ENCODE measurements at regions of chr16 and their contacts with region 1.

Region 1: DNA sequence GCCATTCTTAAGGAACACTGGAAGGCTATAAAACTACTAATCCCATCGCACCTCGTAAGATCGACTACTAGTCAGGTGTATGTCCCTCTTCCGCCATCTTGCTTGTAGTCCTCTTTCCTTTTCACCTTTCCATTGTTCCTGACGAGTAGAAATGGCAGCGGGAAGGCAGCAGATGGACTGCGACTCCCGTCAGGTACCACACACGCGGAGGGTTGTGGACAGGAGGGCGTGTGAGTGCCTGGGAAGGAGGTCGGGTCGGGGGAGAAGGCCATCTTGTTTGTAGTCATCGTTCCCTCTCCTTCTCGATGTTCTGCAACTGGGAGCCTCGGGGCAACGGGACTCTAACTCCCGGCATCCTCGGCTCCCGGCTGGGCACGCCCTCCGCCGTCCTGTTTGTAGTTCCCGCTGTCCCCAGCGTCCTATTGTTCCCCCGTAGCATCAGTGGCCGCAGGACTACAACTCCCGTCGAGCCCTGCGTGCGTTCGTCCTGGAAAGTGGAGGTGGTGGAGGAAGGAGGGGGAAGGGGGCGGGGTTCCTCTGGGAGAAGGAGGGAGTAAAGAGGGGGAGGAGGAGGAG is 324 bp upstream of the FBXL19 start:
- DNase-seq: peak; percentile 90 to 99 (median 94)
- ATAC-seq: peak; percentile 66
- H3K4me3 ChIP-seq: peak overlapping the region; percentile 75 to 96
- H3K4me3 Mint-ChIP-seq: peak overlapping the region; percentile 99
- H3K27ac ChIP-seq: peak overlapping the region; percentile 73 to 92
- H3K27ac Mint-ChIP-seq: peak overlapping the region; percentile 99
- H3K4me1 ChIP-seq: peaks cover 14% of the 10 kb centered on the region
- H3K4me1 Mint-ChIP-seq: peaks cover 22% of the 10 kb centered on the region
- H3K27me3 ChIP-seq: no peaks in the 10 kb centered on the region
- H3K27me3 Mint-ChIP-seq: no peaks in the 10 kb centered on the region
- CTCF ChIP-seq: no peak

Region 2: DNA sequence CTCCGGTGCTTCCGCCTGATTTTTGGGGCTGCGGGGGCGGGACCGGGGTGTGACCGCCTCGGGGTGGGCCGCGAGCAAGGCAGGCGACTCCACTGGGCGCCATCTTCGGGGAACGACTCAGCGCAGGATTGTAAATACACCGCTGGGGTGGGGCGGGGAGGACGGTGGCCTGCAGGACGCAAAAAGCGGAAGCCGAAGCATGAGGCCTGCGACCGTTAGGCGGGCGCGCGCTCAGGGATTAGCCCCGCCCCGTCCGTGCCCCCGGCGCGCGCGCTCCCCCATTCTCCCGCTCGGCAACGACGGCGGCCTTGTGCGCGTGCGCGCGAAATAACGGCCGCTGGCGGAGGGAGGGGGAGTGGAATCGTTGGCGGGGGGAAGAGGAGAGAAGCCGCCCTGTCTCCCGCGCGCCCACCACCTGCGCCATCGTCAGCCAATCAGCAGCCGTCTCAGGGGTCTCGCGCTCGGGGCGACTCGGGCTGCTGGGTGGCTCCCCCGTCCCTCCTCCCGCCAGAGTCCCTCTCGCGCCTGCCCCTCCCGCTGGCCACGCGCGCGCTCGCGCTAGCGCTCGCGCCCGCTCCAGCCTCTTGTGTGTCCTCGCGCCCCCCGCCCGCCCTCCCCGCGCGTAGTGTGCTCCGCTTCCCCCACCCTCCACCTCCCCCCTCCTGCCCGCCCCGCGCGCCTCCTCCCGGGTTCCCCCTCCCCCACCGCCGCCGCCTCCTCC is 1117.5 kb before region 1 on chr16:
- CTCF ChIA-PET with region 1: no interaction called
- POLR2A ChIA-PET with region 1: no interaction called
- intact Hi-C with region 1: loop called in 1 of 2 experiments (anchors 5 kb)
- DNase-seq: peak; percentile 95 to 99 (median 98)
- ATAC-seq: peak; percentile 60
- H3K4me3 ChIP-seq: peak overlapping the region; percentile 70 to 82
- H3K4me3 Mint-ChIP-seq: peak overlapping the region; percentile 99
- H3K27ac ChIP-seq: peak overlapping the region; percentile 86 to 87
- H3K27ac Mint-ChIP-seq: peak overlapping the region; percentile 100
- H3K4me1 ChIP-seq: peaks cover 42% of the 10 kb centered on the region
- H3K4me1 Mint-ChIP-seq: peaks cover 39% of the 10 kb centered on the region
- H3K27me3 ChIP-seq: no peaks in the 10 kb centered on the region
- H3K27me3 Mint-ChIP-seq: no peaks in the 10 kb centered on the region
- CTCF ChIP-seq: no peak

Region 3: DNA sequence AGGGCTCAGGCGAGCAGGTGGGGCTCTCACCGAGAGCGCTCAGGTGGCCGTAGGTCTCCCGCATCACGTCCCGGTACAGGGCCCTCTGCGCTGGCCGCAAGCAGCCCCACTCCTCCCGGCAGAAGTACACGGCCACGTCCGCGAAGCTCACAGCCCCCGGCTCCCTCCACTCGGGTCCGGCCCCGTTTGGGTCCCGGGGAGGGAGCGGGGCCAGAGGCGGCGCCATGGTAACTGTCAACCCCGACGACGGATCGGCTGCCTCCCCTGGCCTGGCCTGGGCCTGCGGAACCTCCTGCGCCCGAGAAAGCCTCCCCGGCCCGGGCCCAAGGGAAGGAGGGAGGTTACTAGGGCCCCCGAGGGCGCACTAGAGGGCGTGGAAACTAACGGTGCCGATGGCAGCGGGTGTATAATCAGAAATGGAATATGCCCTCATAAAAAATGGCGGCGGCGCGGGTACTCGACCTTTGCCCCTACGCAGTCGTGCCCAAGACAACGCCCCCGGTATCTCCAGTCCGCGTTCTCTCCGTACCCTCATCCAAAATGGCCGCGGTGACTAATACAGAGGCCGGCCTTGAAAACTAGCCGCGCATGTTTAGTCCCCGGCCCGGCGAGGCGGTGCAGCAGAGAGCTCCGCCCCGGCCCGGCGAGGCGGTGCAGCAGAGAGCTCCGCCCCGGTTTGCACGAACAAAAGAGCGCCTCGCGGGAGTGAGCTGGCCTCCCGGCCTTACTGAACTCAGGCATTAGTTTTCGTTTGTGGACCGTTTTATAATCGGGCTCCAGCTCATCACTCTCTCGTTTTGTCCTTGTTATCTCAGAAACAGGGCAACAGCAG is 364.9 kb before region 1 on chr16 and contains the start of gene ZNF764:
- CTCF ChIA-PET with region 1: no interaction called
- POLR2A ChIA-PET with region 1: no interaction called
- intact Hi-C with region 1: loop called in 1 of 2 experiments (anchors 2 kb)
- DNase-seq: peak; percentile 88 to 98 (median 96)
- ATAC-seq: peak; percentile 90
- H3K4me3 ChIP-seq: peak within 1 kb of the TSS; percentile 68 to 84
- H3K4me3 Mint-ChIP-seq: peak within 1 kb of the TSS; percentile 84
- H3K27ac ChIP-seq: peak within 1 kb of the TSS; percentile 80 to 88
- H3K27ac Mint-ChIP-seq: peak within 1 kb of the TSS; percentile 93
- H3K4me1 ChIP-seq: peaks cover 28% of the 10 kb centered on the region
- H3K4me1 Mint-ChIP-seq: peaks cover 35% of the 10 kb centered on the region
- H3K27me3 ChIP-seq: no peaks in the 10 kb centered on the region
- H3K27me3 Mint-ChIP-seq: no peaks in the 10 kb centered on the region
- CTCF ChIP-seq: no peak
- total RNA-seq, gene ZNF764: 15.0 to 15.6 TPM

Region 4: GRCh38 chr16:30698139-30698815 is 224.8 kb before region 1 on chr16:
- CTCF ChIA-PET with region 1: no interaction called
- POLR2A ChIA-PET with region 1: no interaction called
- intact Hi-C with region 1: loop called in 1 of 2 experiments (anchors 1 kb)
- DNase-seq: peak; percentile 96 to 99 (median 99)
- ATAC-seq: peak; percentile 74
- H3K4me3 ChIP-seq: peak overlapping the region; percentile 84 to 99
- H3K4me3 Mint-ChIP-seq: peak overlapping the region; percentile 97
- H3K27ac ChIP-seq: peak overlapping the region; percentile 98 to 100
- H3K27ac Mint-ChIP-seq: peak overlapping the region; percentile 100
- H3K4me1 ChIP-seq: peaks cover 24% of the 10 kb centered on the region
- H3K4me1 Mint-ChIP-seq: peaks cover 35% of the 10 kb centered on the region
- H3K27me3 ChIP-seq: no peaks in the 10 kb centered on the region
- H3K27me3 Mint-ChIP-seq: no peaks in the 10 kb centered on the region
- CTCF ChIP-seq: no peak

Region 5: DNA sequence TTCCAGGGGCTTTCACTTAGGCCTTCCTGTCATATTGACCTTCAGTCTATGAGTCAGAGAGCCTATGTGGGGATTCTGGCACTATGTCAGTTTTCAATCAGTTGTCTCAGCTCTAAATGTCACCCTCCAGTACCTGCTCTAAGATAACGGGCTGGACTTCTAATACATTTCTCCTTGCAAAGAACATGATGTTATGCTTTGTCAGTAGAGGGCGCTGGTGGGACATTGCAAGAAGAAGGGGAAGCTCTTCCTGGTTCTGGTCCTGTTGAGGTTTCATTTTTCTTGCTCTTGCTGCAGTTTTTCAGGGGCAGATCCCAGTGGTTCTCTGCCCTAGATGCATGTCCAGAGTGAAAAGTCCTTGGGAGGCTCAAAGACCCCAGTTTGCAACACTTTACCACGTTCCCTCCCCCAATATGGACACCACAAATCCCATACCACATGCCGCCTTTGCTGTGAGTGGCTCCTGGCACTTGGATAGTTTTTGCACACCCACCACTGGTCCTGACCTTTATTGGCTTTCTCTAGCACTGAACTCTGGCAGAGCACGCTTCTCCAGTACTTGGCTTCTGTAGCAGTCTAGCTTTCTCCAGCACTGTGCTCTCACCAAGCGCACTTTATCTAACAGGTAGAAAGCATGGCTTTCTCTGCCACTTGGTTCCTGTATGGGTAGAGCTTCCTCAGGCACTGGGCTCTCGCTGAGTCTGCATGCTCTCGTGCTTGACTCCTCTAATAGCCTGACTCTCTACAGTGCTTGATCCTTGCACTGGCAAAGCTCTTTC is 78.2 kb before region 1 on chr16:
- CTCF ChIA-PET with region 1: interaction called, 67 read pairs
- POLR2A ChIA-PET with region 1: interaction called, 5 read pairs
- intact Hi-C with region 1: loop called in 1 of 2 experiments (anchors 1 kb)
- DNase-seq: peak; percentile 49 to 92 (median 82)
- ATAC-seq: peak; percentile 93
- H3K4me3 ChIP-seq: no peak overlapping the region
- H3K4me3 Mint-ChIP-seq: peak overlapping the region; percentile 57
- H3K27ac ChIP-seq: no peak overlapping the region
- H3K27ac Mint-ChIP-seq: peak overlapping the region; percentile 84
- H3K4me1 ChIP-seq: peaks cover 6% of the 10 kb centered on the region
- H3K4me1 Mint-ChIP-seq: peaks cover 8% of the 10 kb centered on the region
- H3K27me3 ChIP-seq: no peaks in the 10 kb centered on the region
- H3K27me3 Mint-ChIP-seq: no peaks in the 10 kb centered on the region
- CTCF ChIP-seq: peak; percentile 80

Region 6: DNA sequence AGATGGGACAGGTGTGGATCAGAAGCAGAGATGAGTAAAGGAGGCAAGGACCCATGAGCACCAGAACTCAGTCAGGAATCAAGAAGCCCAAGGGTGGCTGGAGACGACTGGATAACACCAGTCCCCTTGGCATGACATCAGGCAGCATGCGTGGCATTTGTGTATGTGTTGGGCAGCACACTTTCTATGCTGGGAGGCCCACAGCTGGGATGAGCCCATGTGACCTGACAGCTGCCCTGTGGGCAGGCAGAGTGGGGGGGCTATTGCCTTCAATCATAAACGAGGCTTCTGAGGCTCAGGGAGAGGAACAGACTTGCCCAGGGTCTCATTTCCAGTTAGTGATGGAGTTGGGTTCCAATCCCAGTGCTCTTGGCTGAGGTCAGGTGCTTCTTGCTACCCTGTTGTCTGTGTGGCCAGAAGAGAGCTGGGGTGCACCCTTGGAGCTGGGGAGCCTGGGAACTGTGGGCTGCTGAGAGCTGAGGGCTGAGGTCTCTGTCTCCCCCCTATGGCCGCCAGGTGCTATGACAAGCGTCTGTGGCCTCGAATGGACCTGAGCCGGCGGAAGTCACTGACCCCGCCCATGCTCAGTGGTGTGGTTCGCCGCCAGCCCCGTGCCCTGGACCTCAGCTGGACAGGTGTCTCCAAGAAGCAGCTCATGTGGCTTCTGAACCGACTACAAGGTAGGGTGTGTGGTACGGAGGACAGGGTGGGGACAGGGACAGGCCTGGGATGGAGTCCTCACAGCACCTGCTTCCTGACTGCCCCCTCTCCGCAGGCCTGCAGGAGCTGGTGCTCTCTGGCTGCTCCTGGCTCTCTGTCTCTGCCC is 18.8 kb after region 1 on chr16:
- CTCF ChIA-PET with region 1: interaction called, 13 read pairs
- POLR2A ChIA-PET with region 1: interaction called, 3 read pairs
- intact Hi-C with region 1: loop called in 1 of 2 experiments (anchors 1 kb)
- DNase-seq: peak; percentile 34 to 84 (median 62)
- ATAC-seq: peak; percentile 97
- H3K4me3 ChIP-seq: peak overlapping the region in 1 of 2 experiments; percentile 26
- H3K4me3 Mint-ChIP-seq: no peak overlapping the region
- H3K27ac ChIP-seq: peak overlapping the region in 1 of 2 experiments; percentile 9
- H3K27ac Mint-ChIP-seq: no peak overlapping the region
- H3K4me1 ChIP-seq: peaks cover 10% of the 10 kb centered on the region
- H3K4me1 Mint-ChIP-seq: peaks cover 12% of the 10 kb centered on the region
- H3K27me3 ChIP-seq: no peaks in the 10 kb centered on the region
- H3K27me3 Mint-ChIP-seq: no peaks in the 10 kb centered on the region
- CTCF ChIP-seq: peak; percentile 80

Region 7: GRCh38 chr16:31094424-31095120 is 171.5 kb after region 1 on chr16 and contains the start of gene VKORC1:
- CTCF ChIA-PET with region 1: no interaction called
- POLR2A ChIA-PET with region 1: no interaction called
- intact Hi-C with region 1: loop called (anchors 1 kb)
- DNase-seq: peak; percentile 65 to 93 (median 85)
- ATAC-seq: peak; percentile 86
- H3K4me3 ChIP-seq: peak within 1 kb of the TSS; percentile 72 to 91
- H3K4me3 Mint-ChIP-seq: peak within 1 kb of the TSS; percentile 93
- H3K27ac ChIP-seq: peak within 1 kb of the TSS; percentile 69 to 74
- H3K27ac Mint-ChIP-seq: peak within 1 kb of the TSS; percentile 91
- H3K4me1 ChIP-seq: peaks cover 19% of the 10 kb centered on the region
- H3K4me1 Mint-ChIP-seq: peaks cover 25% of the 10 kb centered on the region
- H3K27me3 ChIP-seq: no peaks in the 10 kb centered on the region
- H3K27me3 Mint-ChIP-seq: no peaks in the 10 kb centered on the region
- CTCF ChIP-seq: no peak
- total RNA-seq, gene VKORC1: 23.0 to 27.2 TPM

Measured in CD8-positive, alpha-beta T cell (primary cell).